Transverse colon (tissue), 4 donors: ENCODE measurements at regions of chrX and their contacts with region 1.

Region 1: DNA sequence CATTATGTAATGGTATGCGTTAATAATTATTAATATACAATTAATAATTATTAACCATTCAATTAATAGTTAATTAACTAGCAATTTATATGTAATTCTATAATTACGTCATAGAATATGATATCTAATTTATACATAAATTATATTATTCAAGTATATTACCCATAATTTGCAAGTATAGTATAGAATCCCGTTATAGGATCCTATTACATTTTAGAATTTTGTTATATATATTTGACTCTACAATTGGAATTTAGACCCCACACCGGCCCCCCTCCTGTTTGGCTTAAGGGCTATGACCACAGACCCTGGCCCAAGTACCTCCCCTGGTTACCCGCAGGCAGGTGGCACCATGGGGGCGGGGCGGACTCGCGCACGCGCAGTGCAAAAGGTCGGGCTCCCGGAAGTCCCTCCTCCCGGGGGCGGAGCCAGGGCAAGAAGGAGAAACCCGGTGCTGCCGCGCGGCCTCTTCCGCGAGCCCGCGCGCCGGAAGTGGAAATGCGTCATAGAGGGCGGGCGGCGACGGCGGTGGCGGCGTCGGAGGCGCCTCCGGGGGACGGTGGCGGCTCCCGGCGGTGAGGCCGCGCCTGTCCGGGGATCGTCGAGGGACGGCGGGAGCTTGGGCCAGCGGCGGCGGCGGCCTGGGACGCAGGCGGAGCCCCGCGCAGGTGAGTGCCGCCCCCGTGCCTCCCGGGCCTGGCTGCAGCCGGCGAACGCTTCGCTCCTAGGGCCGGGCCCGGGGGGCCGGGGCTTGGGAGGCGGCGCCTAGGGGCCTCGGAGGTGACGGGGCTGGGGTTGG is at the start of gene AKAP17A:
- DNase-seq: peak; percentile 98
- H3K4me3 ChIP-seq: peak within 1 kb of the TSS; percentile 89 to 99 (median 96)
- H3K27ac ChIP-seq: peak within 1 kb of the TSS; percentile 86 to 96 (median 94)
- H3K4me1 ChIP-seq: peaks cover 4 to 22% (median 14%) of the 10 kb centered on the region in 4 donors
- H3K27me3 ChIP-seq: no peaks in the 10 kb centered on the region
- CTCF ChIP-seq: no peak
- EP300 ChIP-seq: no peak
- POLR2A ChIP-seq: peak; percentile 61
- total RNA-seq, gene AKAP17A: 53.7 to 134 (median 97.7) TPM

Region 2: GRCh38 chrX:386768-387575 is 1204.3 kb before region 1 on chrX and contains the start of gene PPP2R3B:
- in situ Hi-C with region 1: no loop called
- intact Hi-C with region 1: loop called (anchors 5 kb)
- DNase-seq: peak; percentile 99
- H3K4me3 ChIP-seq: peak within 1 kb of the TSS; percentile 36 to 99 (median 90)
- H3K27ac ChIP-seq: peak within 1 kb of the TSS; percentile 91 to 100 (median 97)
- H3K4me1 ChIP-seq: peaks cover 8 to 13% (median 11%) of the 10 kb centered on the region in 4 donors
- H3K27me3 ChIP-seq: no peaks in the 10 kb centered on the region
- CTCF ChIP-seq: peak in 3 of 5 experiments; percentile 11 to 46 (median 18)
- EP300 ChIP-seq: no peak
- POLR2A ChIP-seq: peak; percentile 72
- total RNA-seq, gene PPP2R3B: 7.8 to 27.9 (median 11.6) TPM

Region 3: DNA sequence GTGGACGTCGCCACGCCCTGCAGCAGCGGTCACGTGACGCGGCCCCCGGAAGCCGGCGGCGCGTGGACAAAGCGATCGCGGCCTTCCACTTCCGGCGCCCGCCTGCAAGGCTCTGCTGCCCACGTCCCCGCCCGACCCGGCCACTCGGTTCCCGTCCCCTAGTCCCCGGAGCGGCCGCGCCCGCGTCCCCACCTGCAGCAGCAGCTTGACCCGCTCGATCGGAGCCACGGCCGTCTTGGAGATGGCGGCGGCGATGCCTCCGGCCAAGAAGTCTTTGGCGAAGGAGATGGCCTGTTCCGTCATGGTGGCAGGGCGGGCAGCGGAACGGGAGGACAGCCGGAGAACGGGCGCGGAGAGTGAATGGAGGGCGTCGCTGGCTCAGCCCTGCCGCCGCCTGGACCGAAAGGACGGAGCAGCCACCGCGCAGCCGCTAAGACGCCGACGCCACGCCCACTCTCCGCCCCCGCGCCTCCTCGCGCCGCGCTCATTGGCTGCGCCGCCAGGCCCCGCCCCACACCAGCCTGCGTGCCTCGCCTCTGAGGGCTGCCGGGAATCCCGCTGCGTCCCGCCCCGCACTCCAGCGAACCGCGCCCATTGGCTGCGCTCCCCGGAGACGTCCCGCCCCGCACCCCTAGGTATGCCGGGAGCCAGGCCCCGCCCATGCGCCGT is 199.5 kb before region 1 on chrX and contains the start of gene SLC25A6:
- in situ Hi-C with region 1: loop called in 1 of 4 experiments (anchors 25 kb)
- intact Hi-C with region 1: no loop called
- DNase-seq: peak; percentile 99
- H3K4me3 ChIP-seq: peak within 1 kb of the TSS; percentile 84 to 98 (median 96)
- H3K27ac ChIP-seq: peak within 1 kb of the TSS; percentile 96 to 100 (median 98)
- H3K4me1 ChIP-seq: peaks cover 10 to 43% (median 34%) of the 10 kb centered on the region in 4 donors
- H3K27me3 ChIP-seq: no peaks in the 10 kb centered on the region
- CTCF ChIP-seq: peak in 2 of 5 experiments; percentile 47 to 62
- EP300 ChIP-seq: no peak
- POLR2A ChIP-seq: peak; percentile 94
- total RNA-seq, gene SLC25A6: 473 to 699 (median 574) TPM

Region 4: DNA sequence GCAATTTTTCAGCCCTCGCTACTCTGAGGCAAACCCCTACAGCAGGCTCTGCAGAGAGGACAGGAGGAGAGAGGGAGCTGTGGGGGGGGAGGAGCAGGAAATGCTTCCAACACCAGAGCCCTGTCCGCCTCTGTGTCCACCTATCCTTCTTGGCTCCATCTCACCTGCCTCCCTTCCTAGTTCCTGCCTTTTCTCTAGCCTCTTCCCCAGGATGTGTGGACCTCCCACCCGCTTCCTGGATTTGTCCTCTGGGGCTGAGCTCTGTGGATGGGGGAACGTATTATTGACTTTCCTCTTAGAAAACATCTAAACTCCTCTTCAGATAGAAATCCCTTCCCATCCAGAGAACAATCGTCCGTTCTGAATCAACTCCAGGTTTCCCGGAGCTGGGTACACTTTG is 37.9 kb after region 1 on chrX:
- in situ Hi-C with region 1: no loop called
- intact Hi-C with region 1: no loop called
- DNase-seq: no peak
- H3K4me3 ChIP-seq: no peak overlapping the region
- H3K27ac ChIP-seq: no peak overlapping the region
- H3K4me1 ChIP-seq: no peaks in the 10 kb centered on the region
- H3K27me3 ChIP-seq: no peaks in the 10 kb centered on the region
- CTCF ChIP-seq: no peak
- EP300 ChIP-seq: no peak
- POLR2A ChIP-seq: no peak